ENCODE measurements at regions of chr11 and their contacts with region 1.

Region 1: GRCh38 chr11:112074026-112074811 is at the start of gene NKAPD1:
- DNase-seq: peak; percentile 95
- H3K4me3 Mint-ChIP-seq: peak within 1 kb of the TSS; percentile 95
- H3K27ac Mint-ChIP-seq: peak within 1 kb of the TSS; percentile 96
- H3K4me1 Mint-ChIP-seq: peaks cover 29% of the 10 kb centered on the region
- H3K27me3 Mint-ChIP-seq: peaks cover 4% of the 10 kb centered on the region
- total RNA-seq, gene NKAPD1: 24.4 and 27.0 TPM in 2 replicates

Region 2: DNA sequence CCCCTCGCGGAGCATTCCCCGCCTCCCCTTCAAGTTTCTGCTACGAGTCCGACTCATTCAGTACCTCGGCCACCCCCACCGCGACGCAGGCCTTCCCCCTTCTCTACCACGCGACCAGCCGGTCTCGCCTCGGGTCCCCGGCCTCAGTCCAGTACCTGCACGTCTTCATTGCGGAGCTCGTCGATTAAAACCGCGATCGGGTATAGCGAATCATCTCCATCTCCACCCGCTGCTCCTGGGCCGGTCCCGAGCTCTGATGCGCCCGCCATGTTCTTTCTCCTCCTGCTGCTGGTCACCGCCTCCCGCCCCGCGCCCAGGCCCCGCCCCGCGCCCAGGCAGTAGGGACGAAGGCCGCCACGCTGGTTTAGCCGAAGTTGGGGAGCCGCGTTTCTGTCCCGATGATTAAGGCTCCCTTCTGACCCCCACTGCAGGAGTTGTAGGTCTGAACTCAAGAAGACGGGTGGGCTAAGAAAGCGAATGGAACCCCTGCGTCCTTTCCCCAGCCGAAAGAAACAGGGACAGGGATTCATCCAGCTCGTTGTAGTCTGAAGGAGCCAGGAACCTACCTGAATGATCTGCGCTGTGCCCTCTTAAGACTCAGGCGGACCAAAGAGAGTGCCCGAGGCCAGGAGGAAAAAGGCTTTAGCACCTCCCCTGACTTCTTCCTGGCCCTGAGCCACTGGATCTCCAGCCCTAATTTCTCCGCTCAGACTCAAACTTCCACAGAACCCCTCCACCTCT is 308.0 kb before region 1 on chr11 and contains the start of gene PPP2R1B:
- intact Hi-C with region 1: loop called (anchors 5 kb)
- DNase-seq: peak; percentile 91
- H3K4me3 Mint-ChIP-seq: peak within 1 kb of the TSS; percentile 85
- H3K27ac Mint-ChIP-seq: peak within 1 kb of the TSS; percentile 98
- H3K4me1 Mint-ChIP-seq: peaks cover 31% of the 10 kb centered on the region
- H3K27me3 Mint-ChIP-seq: no peaks in the 10 kb centered on the region
- total RNA-seq, gene PPP2R1B: 63.2 and 63.6 TPM in 2 replicates

Region 3: DNA sequence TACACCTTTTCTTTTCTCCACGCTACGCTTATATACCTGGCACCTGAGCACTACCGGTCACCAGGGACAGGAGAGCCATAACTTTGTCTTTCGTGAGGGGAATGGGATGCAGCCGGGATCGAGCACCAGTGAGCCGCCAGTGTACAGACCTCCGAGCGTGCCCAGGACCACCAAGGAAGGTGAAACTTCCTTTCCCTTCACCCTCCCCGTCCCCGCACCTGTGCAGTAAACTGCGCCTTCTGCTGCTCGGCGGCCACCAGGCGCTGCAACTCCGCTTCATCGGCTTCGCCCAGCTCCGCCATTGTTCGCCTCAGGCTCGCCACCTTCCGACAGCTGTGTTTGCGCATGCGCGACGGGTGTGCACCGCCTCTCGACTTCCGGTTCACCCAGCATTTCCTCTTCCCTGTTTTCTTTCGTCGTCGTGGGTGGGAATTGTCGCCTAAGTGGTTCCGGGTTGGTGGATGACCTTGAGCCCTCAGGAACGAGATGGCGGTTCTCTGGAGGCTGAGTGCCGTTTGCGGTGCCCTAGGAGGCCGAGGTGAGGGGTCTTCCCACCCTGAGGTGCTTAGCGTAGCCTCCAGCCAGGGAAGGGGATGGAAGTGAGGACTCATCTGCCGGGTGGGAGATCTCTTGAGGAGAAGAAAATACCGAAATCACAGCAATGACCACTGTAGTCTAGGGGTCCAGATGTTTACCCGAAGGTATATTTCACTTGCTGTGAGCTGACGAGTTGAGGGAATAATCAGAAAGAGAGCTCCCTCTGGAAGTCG is 12.4 kb after region 1 on chr11 and contains the starts of genes SDHD and TIMM8B:
- intact Hi-C with region 1: loop called (anchors 1 kb)
- DNase-seq: peak; percentile 99
- H3K4me3 Mint-ChIP-seq: peak within 1 kb of the TSS; percentile 100
- H3K27ac Mint-ChIP-seq: peak within 1 kb of the TSS; percentile 99
- H3K4me1 Mint-ChIP-seq: peaks cover 52% of the 10 kb centered on the region
- H3K27me3 Mint-ChIP-seq: peaks cover 2% of the 10 kb centered on the region
- total RNA-seq, gene SDHD: 95.2 and 101 TPM in 2 replicates
- total RNA-seq, gene TIMM8B: 86.3 and 89.7 TPM in 2 replicates